Left ventricle myocardium inferior (tissue), 1 donor: ENCODE measurements at regions of chr11 and their contacts with region 1.

Region 1: DNA sequence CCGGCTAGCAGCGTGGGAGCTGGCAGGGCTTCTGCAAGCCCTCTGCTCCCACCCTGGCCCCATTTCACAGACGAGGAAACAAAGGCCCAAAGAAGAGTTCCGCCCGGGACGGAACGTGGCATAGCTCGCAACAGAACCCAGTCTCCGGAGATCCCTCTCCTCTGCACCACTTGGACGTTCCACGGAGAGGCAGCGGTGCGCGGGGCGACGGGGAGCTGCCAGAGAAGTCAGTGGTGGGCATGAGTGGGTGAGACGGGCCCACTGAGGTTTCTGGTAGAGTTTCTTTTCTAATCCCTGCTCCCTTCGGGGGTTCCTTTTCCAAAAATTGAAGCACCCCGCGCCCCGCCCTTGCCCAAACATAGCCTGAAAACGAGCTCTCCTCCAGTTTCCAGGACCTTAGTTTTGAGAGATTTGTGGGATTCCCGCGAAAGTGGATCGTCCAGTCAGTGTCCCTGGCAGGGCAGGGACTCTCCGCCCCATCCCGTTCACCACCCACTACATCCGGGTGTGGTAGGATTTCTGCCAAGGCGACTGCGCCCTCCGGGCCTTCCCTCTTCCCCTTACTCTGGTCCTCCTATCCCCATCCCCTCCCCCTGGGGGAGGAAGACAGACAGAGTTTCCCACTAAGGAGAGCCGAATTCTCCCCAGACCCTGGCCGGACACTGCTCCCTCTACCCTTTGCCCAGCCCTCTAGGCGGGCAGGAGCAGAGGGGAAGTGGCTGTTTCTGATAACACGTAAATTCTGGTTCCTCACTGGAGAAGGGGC is 764 bp upstream of the NECTIN1 start:
- DNase-seq: peak; percentile 69
- H3K4me3 ChIP-seq: peak overlapping the region; percentile 89
- H3K27ac ChIP-seq: peak overlapping the region; percentile 90
- H3K4me1 ChIP-seq: peaks cover 40% of the 10 kb centered on the region
- H3K27me3 ChIP-seq: no peaks in the 10 kb centered on the region
- CTCF ChIP-seq: peak; percentile 47

Region 2: DNA sequence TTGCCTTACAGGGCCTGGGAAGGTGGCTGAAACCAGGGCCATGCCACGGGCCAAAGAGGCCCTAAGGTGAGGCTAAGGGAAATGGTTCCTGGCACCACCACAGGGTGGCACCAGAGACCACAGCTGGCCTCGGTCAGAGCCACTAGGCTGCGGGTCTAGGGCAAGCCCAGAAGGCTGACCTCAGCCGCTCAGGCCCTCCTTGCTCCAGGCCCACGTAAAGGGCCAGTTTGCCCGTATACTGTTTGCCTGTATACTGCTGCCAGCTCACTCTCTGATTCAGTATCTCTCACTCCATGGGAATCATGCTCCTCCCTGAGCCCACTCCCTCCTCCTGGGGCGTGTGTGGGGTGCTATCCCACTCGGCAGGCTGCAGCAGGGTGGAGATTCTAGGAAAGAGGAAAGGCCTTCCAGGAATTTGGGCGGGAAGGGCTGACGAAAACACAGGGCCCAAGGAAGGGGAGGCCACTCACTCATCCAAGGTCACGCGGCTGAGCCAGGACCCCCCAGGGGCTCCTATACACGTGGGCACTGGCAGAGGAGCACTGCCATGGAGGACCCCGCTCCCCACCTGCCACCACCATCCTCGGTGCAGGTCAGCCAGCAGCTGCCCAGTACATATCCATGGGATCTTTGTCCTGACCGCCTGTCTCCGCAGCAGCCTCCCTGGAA is 63.2 kb before region 1 on chr11:
- intact Hi-C with region 1: loop called (anchors 5 kb)
- DNase-seq: peak; percentile 81
- H3K4me3 ChIP-seq: no peak overlapping the region
- H3K27ac ChIP-seq: peak overlapping the region; percentile 39
- H3K4me1 ChIP-seq: peaks cover 21% of the 10 kb centered on the region
- H3K27me3 ChIP-seq: no peaks in the 10 kb centered on the region
- CTCF ChIP-seq: peak; percentile 98

Region 3: GRCh38 chr11:119791701-119792151 is 62.0 kb after region 1 on chr11:
- intact Hi-C with region 1: no loop called
- DNase-seq: no peak
- H3K4me3 ChIP-seq: no peak overlapping the region
- H3K27ac ChIP-seq: no peak overlapping the region
- H3K4me1 ChIP-seq: peaks cover 8% of the 10 kb centered on the region
- H3K27me3 ChIP-seq: peaks cover 24% of the 10 kb centered on the region
- CTCF ChIP-seq: no peak